Natural killer cell (primary cell): ENCODE measurements at regions of chr3 and their contacts with region 1.

Region 1: DNA sequence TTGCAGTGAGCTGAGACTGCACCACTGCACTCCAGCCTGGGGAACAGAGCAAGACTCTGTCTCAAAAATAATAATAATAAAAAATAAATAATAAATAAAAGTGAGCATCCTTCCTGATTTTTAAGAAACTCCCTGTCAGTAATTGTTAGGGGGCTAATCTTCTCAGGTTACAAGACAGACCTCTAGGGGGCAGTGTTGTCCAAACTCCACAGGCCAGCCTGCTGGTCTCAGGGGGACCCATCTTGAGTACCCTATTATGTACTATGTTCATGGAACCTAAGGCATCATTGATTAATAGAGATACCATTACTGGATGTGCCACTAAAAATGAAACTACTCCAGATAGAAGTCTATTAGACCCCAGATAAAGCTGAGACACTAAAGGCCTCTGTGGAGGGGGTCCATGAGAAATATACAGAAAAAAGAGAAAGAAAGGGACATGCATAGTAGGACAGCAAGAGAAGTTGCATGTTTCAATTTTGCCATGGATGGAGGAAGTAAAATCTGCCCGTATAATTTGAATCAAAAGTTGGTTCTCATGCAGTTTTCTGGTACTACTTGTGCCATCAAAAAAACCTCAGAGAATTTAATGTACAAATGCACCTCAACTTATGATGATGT is 85.5 kb upstream of the CDV3 start:
- DNase-seq: peak; percentile 26 to 84
- ATAC-seq: peak; percentile 73 to 81 (median 73)
- H3K4me3 ChIP-seq: no peak overlapping the region
- H3K4me3 Mint-ChIP-seq: no peak overlapping the region
- H3K27ac ChIP-seq: no peak overlapping the region
- H3K27ac Mint-ChIP-seq: no peak overlapping the region
- H3K4me1 ChIP-seq: peaks cover 19% of the 10 kb centered on the region
- H3K4me1 Mint-ChIP-seq: peaks cover 0 to 7% of the 10 kb centered on the region in 2 donors
- H3K27me3 ChIP-seq: no peaks in the 10 kb centered on the region
- H3K27me3 Mint-ChIP-seq: peaks cover 0 to 3% of the 10 kb centered on the region in 2 donors
- CTCF ChIP-seq: peak; percentile 65

Region 2: DNA sequence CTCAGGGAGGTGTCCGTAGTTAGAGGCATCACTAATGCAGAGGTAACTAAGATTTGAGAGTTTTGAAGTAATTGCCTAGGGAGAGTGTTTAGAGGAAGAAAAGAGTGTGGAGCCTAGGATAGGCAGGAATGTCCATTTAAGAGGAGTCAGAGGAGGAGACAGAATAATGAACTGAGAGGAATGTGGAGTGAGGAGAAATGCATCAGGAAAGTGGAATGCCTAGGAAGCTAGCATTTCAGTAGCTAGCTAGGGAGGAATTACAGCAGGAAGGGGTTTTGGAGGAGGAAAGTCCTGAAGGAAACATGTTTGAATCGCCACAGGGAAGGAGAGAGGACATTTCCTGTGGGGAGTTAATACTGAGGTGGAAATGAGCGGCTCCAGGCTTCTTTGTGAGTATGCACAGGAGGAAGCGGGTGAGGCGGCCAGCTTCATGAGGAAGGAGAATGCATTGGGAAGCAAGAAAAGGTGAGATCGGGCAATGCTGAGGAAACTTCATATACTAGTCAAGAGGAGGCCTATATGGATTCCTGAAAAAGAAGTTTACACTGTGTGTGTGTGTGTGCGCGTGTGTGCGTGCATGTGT is 295.6 kb before region 1 on chr3:
- intact Hi-C with region 1: no loop called
- DNase-seq: no peak
- ATAC-seq: no peak
- H3K4me3 ChIP-seq: no peak overlapping the region
- H3K4me3 Mint-ChIP-seq: no peak overlapping the region
- H3K27ac ChIP-seq: no peak overlapping the region
- H3K27ac Mint-ChIP-seq: no peak overlapping the region
- H3K4me1 ChIP-seq: no peaks in the 10 kb centered on the region
- H3K4me1 Mint-ChIP-seq: no peaks in the 10 kb centered on the region
- H3K27me3 ChIP-seq: no peaks in the 10 kb centered on the region
- H3K27me3 Mint-ChIP-seq: no peaks in the 10 kb centered on the region
- CTCF ChIP-seq: no peak

Region 3: DNA sequence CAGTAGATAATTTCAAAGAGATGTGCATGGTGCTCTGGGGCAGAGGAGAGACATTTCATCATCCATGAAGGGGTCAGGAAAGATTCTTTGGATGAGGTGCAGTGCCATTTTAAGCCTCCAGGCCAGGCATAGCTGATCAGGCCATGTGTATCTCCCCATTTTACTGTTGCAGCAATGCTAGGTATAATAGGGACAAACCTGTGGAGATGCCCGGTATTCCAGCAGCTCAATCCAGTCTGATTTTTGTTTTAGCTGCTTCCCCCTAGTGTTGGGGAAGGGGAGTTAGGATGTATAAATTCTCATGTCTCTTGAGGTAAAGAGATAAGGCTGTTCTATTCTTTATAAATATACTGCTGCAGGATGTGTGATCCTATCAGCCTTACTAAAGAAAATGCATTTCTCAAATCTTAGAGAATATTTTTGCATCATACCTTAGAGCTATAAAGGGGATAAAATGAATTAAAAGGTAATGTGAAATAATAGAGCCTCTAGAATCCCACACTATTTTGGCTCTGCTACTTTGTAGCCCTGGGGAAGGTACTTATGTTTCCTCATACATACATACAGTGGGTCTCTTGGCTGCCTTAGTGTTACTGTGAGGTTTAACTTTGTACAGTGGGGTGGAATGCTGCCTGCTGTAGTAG is 90.6 kb after region 1 on chr3:
- intact Hi-C with region 1: loop called (anchors 1 kb)
- DNase-seq: peak in 1 of 2 donors; percentile 41
- ATAC-seq: no peak
- H3K4me3 ChIP-seq: no peak overlapping the region
- H3K4me3 Mint-ChIP-seq: peak overlapping the region; percentile 71
- H3K27ac ChIP-seq: no peak overlapping the region
- H3K27ac Mint-ChIP-seq: peak overlapping the region; percentile 99
- H3K4me1 ChIP-seq: peaks cover 24% of the 10 kb centered on the region
- H3K4me1 Mint-ChIP-seq: peaks cover 61 to 65% of the 10 kb centered on the region in 2 donors
- H3K27me3 ChIP-seq: no peaks in the 10 kb centered on the region
- H3K27me3 Mint-ChIP-seq: no peaks in the 10 kb centered on the region
- CTCF ChIP-seq: peak; percentile 34